ENCODE measurements at regions of chr1 and their contacts with region 1.

Region 1: GRCh38 chr1:9942939-9943788 is at the starts of genes LZIC and NMNAT1:
- DNase-seq: peak; percentile 74 to 94 (median 89)
- ATAC-seq: peak; percentile 91
- H3K4me3 ChIP-seq: peak within 1 kb of the TSS; percentile 82 to 88
- H3K4me3 Mint-ChIP-seq: peak within 1 kb of the TSS; percentile 89
- H3K27ac ChIP-seq: peak within 1 kb of the TSS; percentile 88 to 90
- H3K27ac Mint-ChIP-seq: peak within 1 kb of the TSS; percentile 90
- H3K4me1 ChIP-seq: peaks cover 20% of the 10 kb centered on the region
- H3K4me1 Mint-ChIP-seq: peaks cover 31% of the 10 kb centered on the region
- H3K27me3 ChIP-seq: no peaks in the 10 kb centered on the region
- H3K27me3 Mint-ChIP-seq: no peaks in the 10 kb centered on the region
- CTCF ChIP-seq: no peak
- total RNA-seq, gene LZIC: 12.9 to 13.6 TPM
- total RNA-seq, gene NMNAT1: 1.1 to 1.2 TPM

Region 2: DNA sequence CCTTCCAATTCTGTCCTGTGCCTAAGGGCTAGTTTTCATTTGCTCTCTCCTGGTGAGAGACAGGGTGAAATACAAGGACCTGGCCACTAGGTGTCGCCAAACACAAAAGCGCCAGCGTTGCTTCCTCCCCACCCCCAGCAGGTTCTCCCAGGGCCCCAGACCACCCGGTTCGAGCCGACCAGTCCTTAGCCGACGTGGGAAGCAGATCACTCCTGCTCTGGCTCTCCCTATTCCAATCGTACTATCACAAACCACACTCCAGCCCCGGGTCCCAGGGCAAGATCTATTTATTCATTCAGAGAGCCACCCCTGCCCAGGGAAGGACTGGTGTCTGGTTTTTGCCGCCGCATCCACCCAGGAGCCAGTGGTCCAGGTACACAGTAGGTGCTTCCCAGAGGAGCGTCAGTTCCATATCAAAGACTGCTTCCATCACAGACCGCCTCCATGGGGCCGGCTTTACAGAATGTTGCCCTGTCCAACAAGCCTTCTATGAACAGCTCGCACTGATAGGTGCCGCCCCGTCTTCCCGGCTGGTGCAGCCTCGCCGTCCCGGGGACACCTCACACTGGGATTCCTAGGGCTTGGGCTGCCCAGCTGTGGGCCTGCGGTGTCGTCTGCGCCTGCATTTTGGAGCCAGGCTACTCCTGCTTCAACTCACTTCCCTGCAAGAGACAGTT is 68.1 kb before region 1 on chr1:
- CTCF ChIA-PET with region 1: interaction called, 5 read pairs
- POLR2A ChIA-PET with region 1: no interaction called
- intact Hi-C with region 1: loop called (anchors 1 to 2 kb)
- DNase-seq: peak; percentile 49 to 85 (median 76)
- ATAC-seq: peak; percentile 99
- H3K4me3 ChIP-seq: no peak overlapping the region
- H3K4me3 Mint-ChIP-seq: peak overlapping the region; percentile 26
- H3K27ac ChIP-seq: no peak overlapping the region
- H3K27ac Mint-ChIP-seq: no peak overlapping the region
- H3K4me1 ChIP-seq: no peaks in the 10 kb centered on the region
- H3K4me1 Mint-ChIP-seq: peaks cover 4% of the 10 kb centered on the region
- H3K27me3 ChIP-seq: no peaks in the 10 kb centered on the region
- H3K27me3 Mint-ChIP-seq: no peaks in the 10 kb centered on the region
- CTCF ChIP-seq: peak; percentile 83